PC-9 (cell line): ENCODE measurements at regions of chr11 and their contacts with region 1.

Region 1: GRCh38 chr11:94493281-94494125 is at the starts of genes ANKRD49 and MRE11:
- DNase-seq: peak; percentile 97 to 99
- H3K4me3 ChIP-seq: peak within 1 kb of the TSS; percentile 87
- H3K27ac ChIP-seq: peak within 1 kb of the TSS; percentile 73
- H3K4me1 ChIP-seq: peaks cover 23% of the 10 kb centered on the region
- H3K27me3 ChIP-seq: no peaks in the 10 kb centered on the region
- CTCF ChIP-seq: no peak
- total RNA-seq, gene ANKRD49: 8.7 and 12.7 TPM in 2 replicates
- total RNA-seq, gene MRE11: 40.3 and 41.1 TPM in 2 replicates

Region 2: DNA sequence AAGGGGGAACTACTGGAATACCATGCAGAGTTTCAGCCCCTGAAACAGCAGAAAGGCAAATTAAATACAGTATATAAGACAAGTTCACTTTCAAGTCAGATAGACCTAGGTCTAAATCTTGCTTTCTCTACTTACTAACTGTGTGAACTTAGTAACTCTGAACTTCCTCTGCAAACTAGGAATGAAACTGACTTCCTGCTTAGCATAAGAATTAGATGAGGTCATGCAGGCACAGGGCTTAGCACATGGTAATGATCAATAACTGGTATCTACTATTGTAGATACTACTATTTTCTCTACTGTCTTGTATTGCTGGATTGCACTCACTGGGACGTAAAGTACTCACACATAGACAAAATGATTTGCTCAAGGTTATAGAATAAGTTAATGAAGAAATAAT is 1575.6 kb before region 1 on chr11:
- CTCF ChIA-PET with region 1: no interaction called
- POLR2A ChIA-PET with region 1: interaction called, 38 read pairs
- intact Hi-C with region 1: no loop called
- DNase-seq: no peak
- H3K4me3 ChIP-seq: no peak overlapping the region
- H3K27ac ChIP-seq: no peak overlapping the region
- H3K4me1 ChIP-seq: no peaks in the 10 kb centered on the region
- H3K27me3 ChIP-seq: no peaks in the 10 kb centered on the region
- CTCF ChIP-seq: no peak

Region 3: DNA sequence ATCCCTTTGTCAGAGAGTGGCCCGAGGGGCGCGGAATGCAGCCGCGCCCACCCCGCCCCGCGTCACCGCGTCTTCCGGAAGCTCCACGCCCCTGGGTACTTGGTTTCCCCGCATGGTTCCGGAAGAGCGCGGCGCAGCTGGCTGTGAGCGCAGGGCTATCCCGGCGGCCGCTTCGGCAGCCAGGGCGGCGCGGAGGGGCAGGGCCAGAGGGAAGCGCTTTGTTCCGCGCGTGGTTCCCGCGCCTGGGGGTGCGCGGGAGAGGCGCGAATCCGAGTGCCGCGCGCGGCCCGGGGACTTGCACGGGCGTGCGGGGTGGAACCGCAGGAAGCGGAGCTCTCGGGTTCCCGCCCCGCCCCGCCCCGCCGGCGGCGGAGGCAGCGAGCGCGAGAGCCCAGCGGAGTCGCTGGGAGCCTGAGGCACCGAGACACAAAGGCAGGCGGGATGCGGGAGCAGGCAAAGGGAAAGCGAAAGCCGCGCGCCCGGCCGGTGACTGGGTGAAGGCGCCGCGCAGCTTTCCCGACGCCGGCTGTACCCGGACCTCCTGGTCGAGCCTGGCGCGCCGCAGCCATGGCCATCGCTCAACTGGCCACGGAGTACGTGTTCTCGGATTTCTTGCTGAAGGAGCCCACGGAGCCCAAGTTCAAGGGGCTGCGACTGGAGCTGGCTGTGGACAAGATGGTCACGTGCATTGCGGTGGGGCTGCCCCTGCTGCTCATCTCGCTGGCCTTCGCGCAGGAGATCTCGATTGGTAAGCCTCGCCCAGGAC is 364.6 kb before region 1 on chr11 and contains the start of gene PANX1:
- CTCF ChIA-PET with region 1: no interaction called
- POLR2A ChIA-PET with region 1: no interaction called
- intact Hi-C with region 1: loop called (anchors 5 kb)
- DNase-seq: peak; percentile 79 to 80
- H3K4me3 ChIP-seq: peak within 1 kb of the TSS; percentile 92
- H3K27ac ChIP-seq: peak within 1 kb of the TSS; percentile 86
- H3K4me1 ChIP-seq: peaks cover 52% of the 10 kb centered on the region
- H3K27me3 ChIP-seq: no peaks in the 10 kb centered on the region
- CTCF ChIP-seq: no peak
- total RNA-seq, gene PANX1: 10.5 and 12.6 TPM in 2 replicates

Region 4: DNA sequence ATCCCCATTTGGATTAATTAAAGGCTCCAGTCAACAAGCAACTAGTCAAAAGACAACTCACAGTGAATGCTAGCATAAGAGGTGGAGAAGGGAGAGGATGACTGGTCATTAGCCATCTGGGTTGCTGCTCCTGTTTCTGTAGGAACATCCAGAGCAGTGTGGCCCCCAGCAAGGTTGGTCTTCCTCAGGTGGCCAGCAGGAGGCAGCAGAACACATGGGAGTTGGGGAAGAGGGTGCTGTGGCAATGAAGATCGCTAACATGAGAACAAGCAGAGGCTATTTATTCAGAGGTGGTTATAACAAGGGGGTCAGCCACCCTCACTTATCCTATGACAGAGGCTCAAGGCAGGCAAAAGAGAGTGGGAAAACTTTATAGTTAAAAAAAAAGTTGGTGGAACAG is 167.8 kb before region 1 on chr11:
- CTCF ChIA-PET with region 1: no interaction called
- POLR2A ChIA-PET with region 1: no interaction called
- intact Hi-C with region 1: loop called (anchors 10 kb)
- DNase-seq: peak in 1 of 2 experiments; percentile 41
- H3K4me3 ChIP-seq: no peak overlapping the region
- H3K27ac ChIP-seq: no peak overlapping the region
- H3K4me1 ChIP-seq: 0 out of 2 replicates have a peak, but pooled peaks cover 6% of the 10 kb centered on the region
- H3K27me3 ChIP-seq: no peaks in the 10 kb centered on the region
- CTCF ChIP-seq: peak; percentile 71

Region 5: DNA sequence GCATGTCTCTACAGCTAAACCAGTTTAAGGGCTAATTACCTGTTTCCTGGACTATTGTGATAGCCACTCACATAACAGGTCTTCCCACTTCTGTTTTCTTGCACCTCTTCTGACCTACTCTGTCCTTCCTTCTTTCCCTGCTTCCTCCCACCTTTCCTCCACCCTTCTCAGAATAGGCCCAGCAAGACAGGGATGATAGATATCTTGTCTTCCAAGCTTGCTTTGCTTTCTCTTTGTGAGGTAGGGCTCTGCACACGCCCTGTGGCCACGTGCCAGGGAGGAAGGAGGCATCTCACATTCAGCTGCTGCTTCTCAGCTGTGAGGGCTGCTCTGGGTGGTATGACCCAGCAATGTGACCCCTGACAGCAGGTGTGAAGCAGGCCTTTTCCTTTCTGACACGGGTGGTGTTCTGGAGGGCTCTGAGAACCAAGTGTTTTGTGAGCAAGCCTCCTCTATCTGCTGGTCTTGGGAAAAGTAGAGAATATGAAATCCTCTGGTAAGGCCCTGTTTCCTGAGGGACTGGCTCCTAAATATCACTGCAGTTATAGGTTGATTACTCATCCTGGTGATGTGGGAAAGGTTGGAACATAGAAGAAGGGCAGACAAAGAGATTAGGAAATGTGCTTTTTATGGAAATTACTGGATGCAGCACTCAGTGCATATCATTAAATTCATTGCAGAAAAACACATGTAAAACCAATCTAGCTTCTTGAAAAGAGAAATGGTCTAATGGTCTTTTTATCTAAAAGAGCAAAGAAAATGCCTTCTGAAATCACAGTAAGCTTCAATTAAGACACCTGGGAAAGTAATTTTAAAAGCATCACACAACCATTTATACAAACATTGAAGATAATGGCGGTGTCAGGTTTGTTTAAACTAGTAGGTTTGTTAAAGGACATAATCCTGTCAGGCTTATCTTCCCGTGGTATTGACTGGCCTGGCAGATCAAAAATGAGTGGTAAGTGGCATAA is 283.1 kb after region 1 on chr11:
- CTCF ChIA-PET with region 1: no interaction called
- POLR2A ChIA-PET with region 1: no interaction called
- intact Hi-C with region 1: no loop called
- DNase-seq: peak; percentile 64 to 94
- H3K4me3 ChIP-seq: peak overlapping the region; percentile 36; the same call in 1 of the 2 replicates
- H3K27ac ChIP-seq: peak overlapping the region; percentile 83
- H3K4me1 ChIP-seq: peaks cover 88% of the 10 kb centered on the region
- H3K27me3 ChIP-seq: no peaks in the 10 kb centered on the region
- CTCF ChIP-seq: no peak